RWPE1 (cell line): ENCODE measurements at regions of chr17 and their contacts with region 1.

Region 1: DNA sequence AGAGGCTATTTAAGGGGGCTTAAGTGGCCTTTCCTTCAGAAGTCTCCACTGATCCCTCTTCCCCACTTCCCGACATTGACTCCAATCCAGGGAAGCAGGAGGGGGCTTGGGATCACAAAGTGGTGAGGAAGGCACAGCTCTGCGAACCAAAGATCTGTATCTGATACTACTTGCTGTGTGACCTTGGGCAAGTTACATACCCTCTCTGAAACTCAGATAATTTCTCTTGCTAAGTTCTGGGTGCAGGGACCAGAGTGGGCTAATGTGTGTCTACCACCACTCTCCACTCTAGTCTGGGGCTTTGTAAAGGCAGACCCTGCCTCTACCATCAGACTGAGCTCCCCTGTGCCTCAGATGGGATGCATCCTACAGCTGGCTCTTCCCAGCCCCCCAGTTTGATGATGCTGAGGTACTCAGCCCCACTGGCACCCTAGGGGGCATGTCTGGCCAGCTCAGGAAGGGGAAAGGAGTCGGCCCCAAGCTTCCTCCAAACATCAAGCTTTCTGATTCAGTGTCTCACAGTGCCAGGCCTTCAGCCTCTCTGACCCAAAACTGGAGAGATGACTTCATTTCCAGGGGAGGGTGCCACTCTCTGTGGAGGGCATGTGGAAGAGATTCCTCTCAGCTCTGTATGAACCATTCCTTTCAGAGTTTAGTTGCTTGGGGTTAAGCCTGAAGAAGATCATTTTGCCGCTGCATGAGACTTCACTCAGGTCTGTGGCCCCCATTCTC is 10.9 kb downstream of the DLX4 start:
- DNase-seq: no peak
- H3K27ac ChIP-seq: peak overlapping the region; percentile 93
- CTCF ChIP-seq: no peak

Region 2: DNA sequence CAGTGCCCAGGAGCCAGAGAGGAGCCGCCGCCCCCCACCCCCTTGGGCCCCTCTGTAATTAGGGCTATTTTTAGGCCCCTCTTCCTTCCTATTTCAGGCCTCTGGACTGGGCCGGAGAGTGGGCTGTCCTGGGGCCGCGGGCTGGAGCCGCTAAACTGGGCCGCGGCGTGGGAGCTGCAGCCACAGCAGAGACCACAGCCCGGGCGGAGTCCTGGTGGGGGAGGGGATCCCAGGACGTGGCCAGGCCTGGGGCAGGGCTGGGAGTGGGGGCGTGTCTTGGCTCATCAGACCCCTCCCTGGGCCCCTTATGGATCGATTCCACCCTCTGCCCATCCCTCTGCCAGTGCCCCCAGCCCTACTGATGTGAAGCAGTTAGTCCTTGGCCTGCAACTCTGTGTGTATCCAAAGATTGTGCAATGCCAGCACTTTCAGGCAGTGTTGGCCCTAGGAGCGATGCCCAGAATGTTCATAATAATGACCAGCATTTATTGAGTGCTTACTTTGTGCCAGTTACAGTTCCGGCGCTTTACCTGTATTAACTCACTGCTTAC is 117.1 kb before region 1 on chr17:
- CTCF ChIA-PET with region 1: no interaction called
- POLR2A ChIA-PET with region 1: no interaction called
- DNase-seq: no peak
- H3K27ac ChIP-seq: no peak overlapping the region
- CTCF ChIP-seq: no peak

Region 3: GRCh38 chr17:49887086-49888028 is 92.6 kb before region 1 on chr17:
- CTCF ChIA-PET with region 1: no interaction called
- POLR2A ChIA-PET with region 1: interaction called, 16 read pairs
- DNase-seq: peak; percentile 94
- H3K27ac ChIP-seq: no peak overlapping the region
- CTCF ChIP-seq: no peak

Region 4: DNA sequence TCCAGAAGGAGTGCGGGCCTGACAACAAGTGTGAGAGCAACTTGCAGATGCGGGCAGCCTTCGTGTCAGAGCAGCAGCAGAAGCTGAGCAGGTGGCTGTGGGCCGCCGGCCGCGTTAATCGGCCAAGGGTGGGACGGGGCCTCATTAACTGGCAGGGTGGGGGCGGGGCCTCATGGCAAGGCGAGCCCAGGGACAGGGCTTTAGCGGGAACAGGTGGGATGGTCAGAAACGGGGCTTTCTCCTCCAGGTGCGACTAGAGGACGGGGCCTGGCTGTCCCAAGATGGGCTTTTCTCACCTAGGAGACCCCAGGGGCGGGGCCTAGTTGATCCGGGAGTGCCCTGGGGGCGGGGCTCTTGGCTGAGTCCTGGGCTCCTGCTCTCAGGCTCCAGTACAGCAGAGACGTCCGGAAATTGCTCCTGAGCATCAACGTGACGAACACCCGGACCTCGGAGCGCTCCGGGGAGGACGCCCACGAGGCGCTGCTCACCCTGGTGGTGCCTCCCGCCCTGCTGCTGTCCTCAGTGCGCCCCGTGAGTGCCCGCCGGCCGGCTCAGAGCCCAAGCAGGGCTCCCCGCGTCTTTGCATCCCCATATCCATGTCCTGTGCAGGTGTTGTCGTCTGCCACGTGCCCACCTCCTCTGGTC is 96.8 kb after region 1 on chr17:
- CTCF ChIA-PET with region 1: no interaction called
- POLR2A ChIA-PET with region 1: no interaction called
- DNase-seq: no peak
- H3K27ac ChIP-seq: peak overlapping the region; percentile 75
- CTCF ChIP-seq: no peak

Region 5: DNA sequence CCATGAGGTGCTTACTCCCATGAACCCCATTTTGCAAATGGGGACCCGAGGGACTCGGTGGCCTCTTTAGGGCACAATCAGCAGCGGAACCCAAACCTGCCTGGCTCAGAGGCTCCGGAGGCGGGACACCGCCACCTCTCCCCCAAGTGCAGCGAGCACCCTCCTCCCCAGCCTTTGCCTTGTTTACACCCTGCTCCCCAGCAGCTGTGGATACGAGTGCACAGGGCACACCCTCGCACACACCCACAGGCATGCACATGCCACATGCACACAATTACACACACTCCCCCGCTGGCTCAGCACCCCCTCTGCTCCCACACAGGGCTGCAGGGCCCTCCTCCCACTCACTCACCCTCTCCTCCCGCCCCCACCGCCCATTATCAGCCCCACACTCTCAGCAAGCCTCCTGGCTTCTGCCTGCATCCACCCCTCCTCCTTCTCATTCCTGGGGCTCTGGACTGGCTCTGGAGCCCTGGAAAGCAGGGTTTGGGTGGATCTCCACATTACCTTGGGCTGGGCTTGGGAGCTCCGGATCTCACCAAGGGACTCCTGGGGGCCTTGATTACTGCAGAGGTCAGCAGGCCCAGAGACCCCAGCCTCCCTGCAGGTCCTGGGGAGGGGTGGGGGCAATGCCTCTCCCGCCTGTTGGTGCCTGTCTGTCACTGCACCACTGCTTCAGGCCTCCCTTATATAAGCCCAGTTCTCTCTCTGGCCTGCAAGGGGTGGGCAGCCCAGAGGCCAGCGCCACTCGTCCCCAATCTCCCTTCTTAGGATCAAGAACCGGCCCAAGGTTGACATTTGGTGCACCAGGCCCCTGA is 121.6 kb after region 1 on chr17:
- CTCF ChIA-PET with region 1: no interaction called
- POLR2A ChIA-PET with region 1: no interaction called
- DNase-seq: no peak
- H3K27ac ChIP-seq: peak overlapping the region; percentile 62
- CTCF ChIP-seq: no peak

Region 6: DNA sequence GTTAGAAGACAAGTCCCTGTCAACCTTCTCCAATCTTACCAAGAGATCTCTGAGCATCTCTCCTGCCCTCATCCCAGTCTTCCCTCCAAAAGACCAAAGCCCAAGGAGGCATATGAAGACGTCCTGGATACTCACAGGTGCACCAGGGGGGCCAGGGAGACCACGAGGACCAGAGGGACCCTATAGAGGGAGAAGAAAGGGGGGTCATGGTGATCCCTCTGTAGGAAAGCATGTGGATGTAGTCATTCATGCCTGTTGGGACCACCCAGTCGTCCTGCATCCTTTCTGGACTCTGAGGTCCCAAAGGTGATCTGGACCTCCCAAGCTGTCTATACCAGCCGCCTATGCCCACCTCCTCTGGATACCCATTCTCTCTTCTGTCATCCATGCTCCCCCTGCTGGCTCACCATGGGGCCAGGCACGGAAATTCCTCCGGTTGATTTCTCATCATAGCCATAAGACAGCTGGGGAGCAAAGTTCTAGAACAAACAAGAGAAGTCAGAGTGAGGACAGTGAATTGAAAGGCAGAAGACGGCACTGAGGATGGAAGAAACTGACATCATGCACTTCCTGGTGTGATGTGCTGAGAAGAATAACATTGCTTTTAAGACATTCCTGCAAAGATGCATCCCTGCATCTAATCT is 218.2 kb after region 1 on chr17:
- CTCF ChIA-PET with region 1: no interaction called
- POLR2A ChIA-PET with region 1: no interaction called
- DNase-seq: peak; percentile 58
- H3K27ac ChIP-seq: no peak overlapping the region
- CTCF ChIP-seq: peak; percentile 71